Activated CD4-positive, alpha-beta memory T cell treated with anti-CD3 and anti-CD28 coated beads for 36 hours (primary cell): ENCODE measurements at regions of chr6 and their contacts with region 1.

Region 1: GRCh38 chr6:117976030-117976651 is 69.1 kb downstream of the SLC35F1 start:
- DNase-seq: no peak
- H3K4me3 Mint-ChIP-seq: no peak overlapping the region
- H3K27ac Mint-ChIP-seq: no peak overlapping the region
- H3K4me1 Mint-ChIP-seq: no peaks in the 10 kb centered on the region
- H3K27me3 Mint-ChIP-seq: peaks cover 7% of the 10 kb centered on the region

Region 2: GRCh38 chr6:117637770-117638169 is 338.4 kb before region 1 on chr6:
- CTCF ChIA-PET with region 1: no interaction called
- POLR2A ChIA-PET with region 1: no interaction called
- intact Hi-C with region 1: no loop called
- DNase-seq: no peak
- H3K4me3 Mint-ChIP-seq: no peak overlapping the region
- H3K27ac Mint-ChIP-seq: no peak overlapping the region
- H3K4me1 Mint-ChIP-seq: no peaks in the 10 kb centered on the region
- H3K27me3 Mint-ChIP-seq: peaks cover 5% of the 10 kb centered on the region

Region 3: DNA sequence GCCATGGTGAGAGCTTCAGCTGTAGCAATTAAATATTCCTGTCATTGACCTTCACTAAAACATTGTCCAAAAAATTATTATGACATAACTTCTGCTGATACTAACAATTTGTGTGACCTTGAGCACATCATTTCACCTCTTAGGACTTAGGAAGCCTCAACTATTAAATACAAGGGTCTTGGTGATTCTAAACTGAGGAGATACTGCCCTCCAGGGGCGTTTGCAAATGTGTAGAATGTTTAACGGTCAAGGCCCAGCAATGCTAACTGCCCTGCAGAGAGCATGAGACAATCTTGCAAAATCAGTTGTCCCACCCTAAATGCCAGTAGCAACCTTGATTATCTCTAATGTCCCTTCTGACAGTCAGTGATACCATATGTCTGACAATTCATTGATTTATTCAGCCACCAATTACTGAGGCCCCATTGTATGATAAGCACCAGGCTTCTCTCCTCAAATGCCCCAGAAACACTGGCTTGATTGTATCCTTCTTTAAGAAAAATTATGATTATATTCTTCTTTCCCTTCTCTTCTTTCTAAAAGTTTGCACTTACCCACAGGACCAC is 287.9 kb after region 1 on chr6:
- CTCF ChIA-PET with region 1: no interaction called
- POLR2A ChIA-PET with region 1: no interaction called
- intact Hi-C with region 1: loop called (anchors 5 kb)
- DNase-seq: no peak
- H3K4me3 Mint-ChIP-seq: no peak overlapping the region
- H3K27ac Mint-ChIP-seq: no peak overlapping the region
- H3K4me1 Mint-ChIP-seq: no peaks in the 10 kb centered on the region
- H3K27me3 Mint-ChIP-seq: no peaks in the 10 kb centered on the region